Endothelial cell of umbilical vein (primary cell): ENCODE measurements at regions of chr5 and their contacts with region 1.

Region 1: DNA sequence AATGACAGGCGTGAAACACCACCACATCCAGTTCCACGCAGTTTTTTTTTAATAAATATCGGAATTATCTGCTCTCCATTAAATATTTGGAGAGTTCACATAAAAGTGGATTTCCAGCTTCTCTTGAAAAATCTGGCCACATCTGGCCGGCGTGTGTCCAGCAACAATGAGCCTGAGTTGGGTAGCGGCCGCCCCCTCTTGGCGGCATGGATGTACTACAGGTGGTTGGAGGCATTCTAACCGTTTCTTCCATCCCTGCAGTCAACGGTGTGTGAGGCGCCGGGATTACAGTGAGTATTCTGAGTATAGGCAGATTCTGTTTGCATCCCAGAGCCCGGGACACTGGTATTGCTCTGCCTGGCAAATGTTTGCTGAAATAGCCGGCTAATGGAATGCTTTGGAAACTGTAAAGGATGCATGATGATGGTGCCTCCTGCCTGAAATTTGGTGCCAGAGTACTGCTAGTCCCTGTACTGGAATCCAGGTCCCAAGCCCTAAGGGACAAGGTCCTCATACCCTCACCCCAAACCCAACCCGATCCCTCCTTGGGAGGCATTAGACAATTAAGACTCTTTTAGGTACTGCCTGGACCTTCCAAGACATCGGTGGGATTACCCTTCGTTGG is 13.6 kb upstream of the GM2A start:
- DNase-seq: peak; percentile 67
- H3K4me3 ChIP-seq: no peak overlapping the region
- H3K27ac ChIP-seq: no peak overlapping the region
- H3K4me1 ChIP-seq: no peaks in the 10 kb centered on the region
- H3K27me3 ChIP-seq: no peaks in the 10 kb centered on the region
- CTCF ChIP-seq: peak; percentile 73 to 88
- POLR2A ChIP-seq: no peak

Region 2: DNA sequence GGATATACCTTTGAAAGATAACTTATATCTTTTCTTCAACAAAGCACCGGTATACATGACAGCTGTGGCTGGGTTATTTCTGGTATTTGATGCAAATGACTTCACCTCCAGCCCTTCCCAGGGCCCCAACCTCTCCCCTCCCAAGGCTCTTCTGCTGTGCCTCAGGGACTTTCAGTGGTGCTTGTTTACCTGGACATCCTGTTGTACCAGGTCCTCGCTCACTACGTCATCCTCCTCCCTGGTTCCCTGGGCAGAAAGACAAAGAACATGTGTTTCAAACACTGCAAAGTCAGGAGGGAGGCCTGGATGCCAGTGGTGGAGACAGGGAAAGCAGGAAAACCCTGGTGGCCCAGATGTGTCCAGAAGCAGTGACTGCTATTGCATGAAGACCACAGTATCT is 105.1 kb before region 1 on chr5:
- CTCF ChIA-PET with region 1: interaction called, 187 read pairs
- POLR2A ChIA-PET with region 1: no interaction called
- dilution Hi-C with region 1: no loop called
- intact Hi-C with region 1: no loop called
- DNase-seq: no peak
- H3K4me3 ChIP-seq: no peak overlapping the region
- H3K27ac ChIP-seq: no peak overlapping the region
- H3K4me1 ChIP-seq: no peaks in the 10 kb centered on the region
- H3K27me3 ChIP-seq: no peaks in the 10 kb centered on the region
- CTCF ChIP-seq: no peak
- POLR2A ChIP-seq: no peak

Region 3: DNA sequence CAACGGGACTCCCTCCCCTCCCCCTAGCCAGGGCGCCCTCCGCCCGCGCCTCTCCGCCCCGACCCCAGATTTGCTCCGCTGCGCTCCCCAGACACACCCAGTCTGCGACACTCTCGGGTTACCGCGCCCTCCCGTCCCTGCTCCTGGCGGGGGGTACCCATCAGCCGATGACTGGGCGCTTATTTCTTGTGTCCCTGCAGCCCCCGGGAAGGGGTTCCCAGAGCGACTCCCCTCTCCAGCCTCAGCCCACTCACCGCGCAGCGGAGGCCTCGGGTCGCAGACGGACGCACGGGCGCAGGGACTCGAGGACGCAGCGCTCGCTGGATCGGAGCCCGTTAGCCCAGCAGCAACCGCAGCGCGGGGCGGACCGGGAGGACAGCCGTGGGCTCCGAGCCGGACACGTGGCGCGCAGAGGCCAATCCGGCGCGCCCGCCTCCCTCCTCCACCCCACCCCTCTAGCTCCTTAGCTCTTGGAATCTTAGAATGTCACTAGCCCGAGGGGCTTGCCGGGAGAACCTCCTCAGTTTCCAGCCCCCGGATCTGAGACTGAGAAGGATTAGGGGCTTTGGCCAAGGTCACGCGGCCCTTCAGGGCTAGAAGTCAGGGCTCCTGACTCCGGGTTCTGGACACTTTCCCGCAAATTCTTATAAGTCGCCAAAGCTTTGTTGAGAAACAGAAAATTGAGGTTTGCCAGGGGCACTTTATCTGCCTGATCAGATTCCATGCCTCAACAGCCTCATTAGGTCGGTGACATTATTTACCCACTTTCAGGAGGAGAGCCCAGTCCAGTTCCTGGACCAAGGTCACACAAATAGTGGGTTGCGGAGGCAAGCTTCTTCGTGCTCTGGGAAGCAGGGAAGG is 81.7 kb before region 1 on chr5 and contains the start of gene ANXA6:
- CTCF ChIA-PET with region 1: interaction called, 17 read pairs
- POLR2A ChIA-PET with region 1: no interaction called
- dilution Hi-C with region 1: no loop called
- intact Hi-C with region 1: no loop called
- DNase-seq: peak; percentile 83
- H3K4me3 ChIP-seq: peak within 1 kb of the TSS; percentile 73 to 92 (median 81)
- H3K27ac ChIP-seq: peak within 1 kb of the TSS; percentile 37
- H3K4me1 ChIP-seq: peaks cover 25% of the 10 kb centered on the region
- H3K27me3 ChIP-seq: no peaks in the 10 kb centered on the region
- CTCF ChIP-seq: no peak
- POLR2A ChIP-seq: no peak
- total RNA-seq, gene ANXA6: 240 and 266 TPM in 2 replicates

Region 4: DNA sequence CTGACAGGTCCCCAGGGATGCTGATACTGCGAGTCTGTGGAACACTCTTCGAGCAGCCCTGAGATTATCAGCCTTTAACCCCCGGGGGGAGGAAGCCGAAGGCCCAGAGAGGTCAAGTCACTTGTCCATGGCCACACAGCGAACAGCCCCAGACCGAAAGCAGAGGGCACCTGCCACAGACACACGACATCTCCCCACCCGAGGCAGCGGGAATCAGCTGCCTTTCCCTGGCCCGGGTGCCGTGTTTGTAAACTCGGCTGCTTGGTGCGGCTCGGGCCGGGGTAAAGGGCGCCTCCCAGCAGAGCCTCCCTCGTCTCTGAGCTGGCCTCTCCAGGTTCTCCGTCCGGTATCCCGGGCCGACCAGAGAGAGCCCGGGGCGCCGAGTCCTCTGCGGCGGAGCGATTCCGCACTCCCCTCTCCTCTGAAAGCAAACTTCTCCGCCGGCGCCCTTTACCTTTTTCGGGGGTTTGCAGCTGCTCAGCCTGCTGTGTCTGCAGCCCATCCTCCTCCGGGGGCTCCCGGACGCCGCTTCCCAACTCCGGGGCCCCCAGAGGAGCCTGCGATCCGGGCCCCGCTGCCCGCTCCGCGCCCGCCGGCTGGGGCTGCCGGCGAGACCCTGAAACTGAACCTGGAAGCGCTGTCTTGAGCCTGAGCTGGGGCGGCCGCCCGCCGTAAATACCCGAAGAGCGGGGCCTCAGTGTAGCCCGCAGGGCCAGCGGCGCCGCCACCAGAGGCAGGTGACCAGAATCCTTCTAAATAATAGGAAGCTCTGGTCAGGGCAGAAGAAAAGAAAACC is 15.7 kb before region 1 on chr5 and contains the start of gene CCDC69:
- CTCF ChIA-PET with region 1: interaction called, 32 read pairs
- POLR2A ChIA-PET with region 1: interaction called, 4 read pairs
- dilution Hi-C with region 1: no loop called
- intact Hi-C with region 1: no loop called
- DNase-seq: peak; percentile 82
- H3K4me3 ChIP-seq: peak within 1 kb of the TSS; percentile 57 to 91 (median 70)
- H3K27ac ChIP-seq: no peak within 1 kb of the TSS
- H3K4me1 ChIP-seq: peaks cover 6% of the 10 kb centered on the region
- H3K27me3 ChIP-seq: no peaks in the 10 kb centered on the region
- CTCF ChIP-seq: peak in 1 of 2 donors; percentile 44
- POLR2A ChIP-seq: peak; percentile 60
- total RNA-seq, gene CCDC69: 4.3 and 4.5 TPM in 2 replicates

Region 5: DNA sequence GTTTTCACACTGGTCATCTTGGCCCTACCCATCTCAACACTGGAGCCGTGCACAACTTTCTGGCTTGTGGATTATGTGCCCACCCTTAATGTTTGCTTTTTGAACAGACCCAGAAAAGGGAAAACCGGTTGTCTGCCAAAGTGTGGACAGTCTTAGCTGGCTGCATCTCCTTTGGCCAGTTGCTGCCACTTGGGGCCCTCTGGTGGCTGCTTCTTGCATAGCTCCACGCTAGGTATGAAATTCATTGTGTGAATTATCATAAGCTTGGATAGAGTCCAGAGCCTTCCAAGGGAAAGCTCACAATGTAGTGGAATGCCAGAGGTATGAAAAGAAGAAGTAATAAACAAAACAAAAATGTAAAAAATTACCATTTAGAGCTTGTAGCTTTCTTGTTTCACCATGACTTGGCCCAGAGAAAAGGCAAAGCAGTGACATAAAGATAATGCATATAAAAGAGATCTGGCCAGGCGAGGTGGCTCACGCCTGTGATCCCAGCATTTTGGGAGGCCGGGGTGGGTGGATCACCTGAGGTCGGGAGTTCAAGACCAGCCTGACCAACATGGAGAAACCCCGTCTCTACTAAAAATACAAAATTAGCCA is 76.7 kb after region 1 on chr5:
- CTCF ChIA-PET with region 1: interaction called, 12 read pairs
- POLR2A ChIA-PET with region 1: no interaction called
- dilution Hi-C with region 1: no loop called
- intact Hi-C with region 1: loop called (anchors 1 kb)
- DNase-seq: peak; percentile 73
- H3K4me3 ChIP-seq: no peak overlapping the region
- H3K27ac ChIP-seq: no peak overlapping the region
- H3K4me1 ChIP-seq: no peaks in the 10 kb centered on the region
- H3K27me3 ChIP-seq: no peaks in the 10 kb centered on the region
- CTCF ChIP-seq: peak; percentile 88 to 90
- POLR2A ChIP-seq: no peak